Ascending aorta (tissue), 2 donors: ENCODE measurements at regions of chr6 and their contacts with region 1.

Region 1: GRCh38 chr6:147506704-147507114 is 1.8 kb upstream of the SAMD5 start:
- DNase-seq: peak in 1 of 2 donors; percentile 75
- H3K4me3 ChIP-seq: peak overlapping the region; percentile 58 to 80
- H3K27ac ChIP-seq: no peak overlapping the region
- H3K4me1 ChIP-seq: peaks cover 0 to 11% of the 10 kb centered on the region in 2 donors
- H3K27me3 ChIP-seq: no peaks in the 10 kb centered on the region
- CTCF ChIP-seq: peak; percentile 57 to 84 (median 75)

Region 2: DNA sequence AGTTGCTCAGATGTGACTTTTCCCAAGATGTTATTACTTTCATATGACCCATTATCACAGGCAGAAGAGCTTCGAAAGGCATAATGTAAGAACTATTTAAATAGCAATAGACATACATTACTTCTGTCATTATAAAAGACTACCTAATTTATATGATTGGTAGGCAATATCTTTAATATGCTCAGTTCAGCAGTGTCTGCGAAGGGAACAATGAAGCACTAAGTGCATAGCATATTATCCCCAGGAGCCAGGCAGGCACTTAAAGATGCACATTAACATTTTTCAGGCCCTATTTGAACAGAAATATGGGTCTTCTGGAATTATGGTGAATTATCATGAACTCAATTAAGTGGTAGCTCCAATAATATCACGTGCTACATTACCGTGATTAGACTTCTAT is 1989.2 kb before region 1 on chr6:
- intact Hi-C with region 1: no loop called
- DNase-seq: no peak
- H3K4me3 ChIP-seq: no peak overlapping the region
- H3K27ac ChIP-seq: no peak overlapping the region
- H3K4me1 ChIP-seq: no peaks in the 10 kb centered on the region
- H3K27me3 ChIP-seq: no peaks in the 10 kb centered on the region
- CTCF ChIP-seq: no peak

Region 3: DNA sequence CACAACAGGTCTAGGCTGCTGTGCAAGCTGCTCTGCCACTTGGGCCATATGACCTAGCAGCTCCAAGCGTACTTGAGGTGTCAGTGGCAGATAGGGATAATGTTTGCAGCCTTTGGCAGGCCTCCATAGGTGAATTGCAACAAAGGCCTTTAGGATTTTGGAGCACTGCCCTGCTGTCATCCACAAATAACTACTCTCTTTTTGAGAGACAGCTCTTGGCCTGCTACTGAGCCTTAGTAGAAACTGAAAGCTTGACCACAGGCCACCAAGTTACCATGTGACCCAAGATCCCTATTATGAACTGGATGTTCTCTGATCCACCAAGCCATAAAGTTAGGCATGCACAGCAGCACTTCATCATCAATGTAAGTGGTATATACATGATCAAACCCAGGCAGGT is 1722.0 kb before region 1 on chr6:
- intact Hi-C with region 1: no loop called
- DNase-seq: no peak
- H3K4me3 ChIP-seq: no peak overlapping the region
- H3K27ac ChIP-seq: no peak overlapping the region
- H3K4me1 ChIP-seq: no peaks in the 10 kb centered on the region
- H3K27me3 ChIP-seq: no peaks in the 10 kb centered on the region
- CTCF ChIP-seq: no peak

Region 4: GRCh38 chr6:147095316-147095715 is 411.4 kb before region 1 on chr6:
- intact Hi-C with region 1: no loop called
- DNase-seq: no peak
- H3K4me3 ChIP-seq: no peak overlapping the region
- H3K27ac ChIP-seq: no peak overlapping the region
- H3K4me1 ChIP-seq: no peaks in the 10 kb centered on the region
- H3K27me3 ChIP-seq: no peaks in the 10 kb centered on the region
- CTCF ChIP-seq: no peak

Region 5: DNA sequence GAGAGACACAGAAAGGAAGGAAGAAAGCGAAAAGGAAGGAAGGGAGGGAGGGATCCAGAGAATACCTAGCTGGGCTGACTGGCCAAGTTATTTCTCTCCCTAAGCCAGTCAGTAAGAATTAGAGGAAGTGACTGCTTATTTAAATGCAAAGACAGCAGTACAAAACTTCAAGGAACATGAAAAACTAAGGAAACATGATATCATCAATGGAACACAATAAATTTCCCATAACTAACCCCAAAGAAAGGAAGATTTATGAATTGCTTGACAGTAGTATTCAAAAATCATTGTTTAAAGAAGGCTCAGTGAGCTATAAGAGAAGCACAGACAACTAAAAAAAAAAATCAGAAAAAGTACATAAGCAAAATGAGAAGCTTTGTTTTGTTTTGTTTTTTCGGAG is 583.6 kb after region 1 on chr6:
- intact Hi-C with region 1: no loop called
- DNase-seq: no peak
- H3K4me3 ChIP-seq: no peak overlapping the region
- H3K27ac ChIP-seq: no peak overlapping the region
- H3K4me1 ChIP-seq: no peaks in the 10 kb centered on the region
- H3K27me3 ChIP-seq: no peaks in the 10 kb centered on the region
- CTCF ChIP-seq: no peak

Region 6: GRCh38 chr6:148166339-148166968 is 659.7 kb after region 1 on chr6:
- intact Hi-C with region 1: loop called (anchors 1 kb)
- DNase-seq: no peak
- H3K4me3 ChIP-seq: no peak overlapping the region
- H3K27ac ChIP-seq: no peak overlapping the region
- H3K4me1 ChIP-seq: no peaks in the 10 kb centered on the region
- H3K27me3 ChIP-seq: no peaks in the 10 kb centered on the region
- CTCF ChIP-seq: peak; percentile 50 to 68 (median 58)

Region 7: GRCh38 chr6:148250975-148251685 is 744.4 kb after region 1 on chr6:
- intact Hi-C with region 1: loop called (anchors 5 kb)
- DNase-seq: no peak
- H3K4me3 ChIP-seq: no peak overlapping the region
- H3K27ac ChIP-seq: no peak overlapping the region
- H3K4me1 ChIP-seq: peaks cover 0 to 13% of the 10 kb centered on the region in 2 donors
- H3K27me3 ChIP-seq: no peaks in the 10 kb centered on the region
- CTCF ChIP-seq: peak in 2 of 3 experiments; percentile 44 to 67